ENCODE measurements at regions of chr2 and their contacts with region 1.

Region 1: DNA sequence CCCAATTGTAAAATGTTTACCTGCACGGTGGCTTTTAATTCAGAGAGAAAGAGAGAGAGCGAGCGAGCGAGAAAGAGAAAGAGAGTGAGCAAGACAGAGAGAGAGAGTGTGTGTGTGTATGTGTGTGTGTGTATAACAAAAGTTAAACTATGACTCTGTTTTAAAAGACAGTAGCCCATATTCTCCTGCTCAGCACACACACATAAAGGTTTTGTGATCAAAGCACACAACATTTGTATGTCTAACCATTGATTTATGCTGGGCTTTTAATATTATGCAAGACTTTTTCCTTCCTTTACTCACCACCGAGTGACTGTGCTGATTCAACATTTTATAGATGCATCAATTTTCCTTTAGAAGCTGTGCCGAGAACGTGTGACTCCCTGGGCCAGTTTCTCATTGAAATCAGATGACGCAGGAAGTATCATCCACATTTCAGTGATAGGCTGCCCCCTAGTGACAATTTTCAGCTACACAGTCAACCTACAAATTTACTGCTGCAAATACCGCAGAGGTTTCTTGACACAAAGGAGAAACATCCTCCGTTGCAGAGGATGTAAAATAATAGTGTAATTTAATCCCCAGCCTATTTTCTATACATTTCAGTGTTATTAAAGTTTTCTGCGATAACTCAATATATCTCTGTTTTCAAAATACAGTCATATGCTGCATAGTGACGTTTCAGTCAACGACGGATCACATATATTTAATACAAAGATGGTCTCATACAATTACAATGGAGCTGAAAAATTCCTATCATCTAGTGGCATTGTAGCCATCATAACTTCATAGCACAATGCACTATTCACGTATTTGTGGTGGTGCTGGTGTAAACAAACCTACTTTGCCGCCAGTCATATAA is 165.9 kb upstream of the TANK start:
- H3K4me3 Mint-ChIP-seq: no peak overlapping the region
- H3K27ac Mint-ChIP-seq: no peak overlapping the region
- H3K4me1 Mint-ChIP-seq: peaks cover 11% of the 10 kb centered on the region
- H3K27me3 Mint-ChIP-seq: no peaks in the 10 kb centered on the region

Region 2: DNA sequence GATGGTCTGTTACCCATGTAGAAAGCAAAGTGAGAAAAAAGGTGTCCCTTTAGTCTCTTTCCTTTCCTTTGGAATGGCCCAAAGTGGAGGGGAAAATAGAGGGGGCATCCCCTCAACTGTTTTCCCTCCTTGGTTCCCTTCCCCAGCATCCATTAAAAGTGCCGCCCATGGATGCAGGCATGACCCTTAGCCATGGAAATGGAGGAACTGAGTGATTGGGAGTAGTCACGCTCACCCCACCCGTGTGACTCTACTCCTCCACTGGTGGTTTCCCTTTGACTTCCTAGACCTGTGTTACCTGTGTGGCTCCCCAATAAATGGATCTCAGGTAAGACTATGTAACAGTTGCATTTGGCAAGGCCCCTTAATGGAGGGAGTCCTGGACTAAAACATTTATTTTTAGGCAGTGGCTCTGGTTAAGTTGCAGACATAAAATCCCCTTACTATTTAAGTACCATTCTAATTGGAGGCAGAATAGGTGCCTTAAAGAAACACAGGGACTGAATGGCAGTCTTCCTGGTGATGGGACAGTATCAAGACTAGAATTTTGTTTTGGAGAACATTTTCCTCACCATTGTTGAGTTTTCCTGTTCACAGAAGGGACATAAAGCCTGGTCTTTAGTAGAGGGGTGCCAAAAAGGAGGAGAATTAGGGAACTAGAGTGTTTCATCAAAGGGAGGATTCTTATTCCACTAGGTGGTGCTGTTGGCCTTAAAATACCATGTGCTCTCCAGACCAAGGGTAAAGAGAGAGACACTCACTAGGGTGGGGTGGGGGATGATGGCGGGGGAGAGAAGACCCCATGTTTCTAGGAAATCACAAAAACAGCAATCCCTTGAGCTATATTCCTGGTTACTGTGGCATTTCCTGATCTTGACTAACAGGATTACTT is 906.3 kb before region 1 on chr2:
- intact Hi-C with region 1: loop called (anchors 5 kb)
- H3K4me3 Mint-ChIP-seq: no peak overlapping the region
- H3K27ac Mint-ChIP-seq: no peak overlapping the region
- H3K4me1 Mint-ChIP-seq: no peaks in the 10 kb centered on the region
- H3K27me3 Mint-ChIP-seq: no peaks in the 10 kb centered on the region

Region 3: GRCh38 chr2:160109936-160110673 is 884.3 kb before region 1 on chr2:
- intact Hi-C with region 1: loop called (anchors 5 kb)
- H3K4me3 Mint-ChIP-seq: no peak overlapping the region
- H3K27ac Mint-ChIP-seq: no peak overlapping the region
- H3K4me1 Mint-ChIP-seq: peaks cover 11% of the 10 kb centered on the region
- H3K27me3 Mint-ChIP-seq: no peaks in the 10 kb centered on the region

Region 4: GRCh38 chr2:160252278-160252887 is 742.0 kb before region 1 on chr2:
- intact Hi-C with region 1: loop called (anchors 10 kb)
- H3K4me3 Mint-ChIP-seq: no peak overlapping the region
- H3K27ac Mint-ChIP-seq: peak overlapping the region; percentile 41
- H3K4me1 Mint-ChIP-seq: peaks cover 10% of the 10 kb centered on the region
- H3K27me3 Mint-ChIP-seq: no peaks in the 10 kb centered on the region

Region 5: GRCh38 chr2:160429248-160430000 is 564.9 kb before region 1 on chr2:
- intact Hi-C with region 1: loop called (anchors 5 kb)
- H3K4me3 Mint-ChIP-seq: no peak overlapping the region
- H3K27ac Mint-ChIP-seq: no peak overlapping the region
- H3K4me1 Mint-ChIP-seq: peaks cover 13% of the 10 kb centered on the region
- H3K27me3 Mint-ChIP-seq: no peaks in the 10 kb centered on the region

Region 6: DNA sequence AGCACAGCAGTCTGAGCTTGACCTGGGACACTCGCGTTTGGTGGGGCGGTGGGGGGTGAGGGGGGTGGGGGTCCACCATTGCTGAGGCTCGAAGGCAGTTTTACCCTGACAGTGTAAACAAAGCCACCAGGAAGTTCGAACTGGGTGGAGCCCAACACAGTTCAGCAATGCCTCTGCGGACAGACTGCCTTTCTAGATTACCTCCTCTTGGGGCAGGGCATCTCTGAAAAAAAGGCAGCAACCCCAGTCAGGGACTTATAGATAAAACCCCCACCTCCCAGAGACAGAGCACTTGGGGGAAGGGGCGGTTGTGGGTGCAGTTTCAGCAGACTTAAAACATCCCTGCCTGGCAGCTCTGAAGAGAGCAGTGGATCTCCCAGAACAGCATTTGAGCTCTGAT is 16.2 kb after region 1 on chr2:
- intact Hi-C with region 1: no loop called
- H3K4me3 Mint-ChIP-seq: no peak overlapping the region
- H3K27ac Mint-ChIP-seq: no peak overlapping the region
- H3K4me1 Mint-ChIP-seq: no peaks in the 10 kb centered on the region
- H3K27me3 Mint-ChIP-seq: no peaks in the 10 kb centered on the region